Activated CD8-positive, alpha-beta T cell treated with anti-CD3 and anti-CD28 coated beads, Interleukin-2, amount 10 ng/mL, durations not matched to agents 7 days and 5 days (primary cell): ENCODE measurements at regions of chr5 and their contacts with region 1.

Region 1: DNA sequence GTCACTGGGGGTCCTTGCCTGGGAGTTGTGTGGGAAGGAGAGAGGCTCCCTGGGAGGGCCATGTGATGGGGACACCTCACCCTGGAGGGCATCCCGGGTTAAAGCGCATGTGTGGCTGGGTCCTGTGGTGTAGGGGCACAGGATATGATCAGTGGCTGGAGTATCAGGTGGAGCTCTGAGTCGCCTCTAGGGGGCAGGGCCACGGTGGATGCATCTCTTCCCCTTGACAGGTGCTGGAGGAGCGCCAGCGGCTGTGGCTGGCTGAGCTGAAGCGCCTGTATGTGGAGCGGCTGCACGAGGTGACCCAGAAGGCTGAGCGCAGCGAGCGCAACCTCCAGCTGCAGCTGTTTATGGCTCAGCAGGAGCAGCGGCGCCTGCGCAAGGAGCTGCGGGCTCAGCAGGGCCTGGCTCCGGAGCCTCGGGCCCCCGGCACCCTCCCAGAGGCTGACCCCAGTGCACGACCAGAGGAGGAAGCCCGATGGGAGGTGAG is 7.6 kb downstream of the N4BP3 start:
- DNase-seq: peak; percentile 90
- ATAC-seq: peak; percentile 87
- H3K4me3 Mint-ChIP-seq: no peak overlapping the region
- H3K27ac Mint-ChIP-seq: no peak overlapping the region
- H3K4me1 Mint-ChIP-seq: peaks cover 31% of the 10 kb centered on the region
- H3K27me3 Mint-ChIP-seq: no peaks in the 10 kb centered on the region

Region 2: GRCh38 chr5:177982072-177982727 is 138.7 kb before region 1 on chr5:
- CTCF ChIA-PET with region 1: no interaction called
- POLR2A ChIA-PET with region 1: no interaction called
- DNase-seq: peak; percentile 53
- ATAC-seq: peak; percentile 57
- H3K4me3 Mint-ChIP-seq: no peak overlapping the region
- H3K27ac Mint-ChIP-seq: no peak overlapping the region
- H3K4me1 Mint-ChIP-seq: peaks cover 8% of the 10 kb centered on the region
- H3K27me3 Mint-ChIP-seq: peaks cover 50% of the 10 kb centered on the region

Region 3: DNA sequence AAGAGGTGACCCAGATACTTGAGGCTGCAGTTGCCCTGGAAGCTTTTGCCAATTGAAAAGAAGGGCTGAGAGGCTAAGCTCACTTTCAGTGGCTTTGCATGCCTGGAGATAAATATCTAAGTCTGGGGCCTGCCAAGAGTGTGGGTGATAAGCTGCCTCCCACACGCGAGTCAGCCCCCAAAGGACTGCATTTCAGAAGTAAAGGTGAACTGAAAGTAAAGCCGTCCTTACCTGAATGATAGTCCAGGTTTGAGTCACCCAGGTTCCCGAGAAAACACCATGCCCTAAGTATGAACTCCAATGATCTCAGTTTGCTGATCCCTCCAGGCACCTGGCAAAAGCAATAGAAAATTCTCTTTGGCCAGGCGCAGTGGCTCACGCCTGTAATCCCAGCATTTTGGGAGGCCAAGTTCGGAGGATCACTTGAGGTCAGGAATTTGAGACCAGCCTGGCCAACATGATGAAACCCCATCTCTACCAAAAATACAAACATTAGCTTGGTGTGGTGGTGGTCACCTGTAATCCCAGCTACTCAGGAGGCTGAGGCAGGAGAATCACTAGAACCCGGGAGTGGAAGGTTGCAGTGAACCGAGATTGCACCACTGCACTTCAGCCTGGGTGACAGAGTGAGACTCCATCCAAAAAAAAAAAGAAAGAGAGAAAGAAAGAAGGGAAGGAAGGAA is 29.9 kb before region 1 on chr5:
- CTCF ChIA-PET with region 1: interaction called, 15 read pairs
- POLR2A ChIA-PET with region 1: no interaction called
- DNase-seq: no peak
- ATAC-seq: no peak
- H3K4me3 Mint-ChIP-seq: no peak overlapping the region
- H3K27ac Mint-ChIP-seq: no peak overlapping the region
- H3K4me1 Mint-ChIP-seq: peaks cover 12% of the 10 kb centered on the region
- H3K27me3 Mint-ChIP-seq: peaks cover 3% of the 10 kb centered on the region

Region 4: DNA sequence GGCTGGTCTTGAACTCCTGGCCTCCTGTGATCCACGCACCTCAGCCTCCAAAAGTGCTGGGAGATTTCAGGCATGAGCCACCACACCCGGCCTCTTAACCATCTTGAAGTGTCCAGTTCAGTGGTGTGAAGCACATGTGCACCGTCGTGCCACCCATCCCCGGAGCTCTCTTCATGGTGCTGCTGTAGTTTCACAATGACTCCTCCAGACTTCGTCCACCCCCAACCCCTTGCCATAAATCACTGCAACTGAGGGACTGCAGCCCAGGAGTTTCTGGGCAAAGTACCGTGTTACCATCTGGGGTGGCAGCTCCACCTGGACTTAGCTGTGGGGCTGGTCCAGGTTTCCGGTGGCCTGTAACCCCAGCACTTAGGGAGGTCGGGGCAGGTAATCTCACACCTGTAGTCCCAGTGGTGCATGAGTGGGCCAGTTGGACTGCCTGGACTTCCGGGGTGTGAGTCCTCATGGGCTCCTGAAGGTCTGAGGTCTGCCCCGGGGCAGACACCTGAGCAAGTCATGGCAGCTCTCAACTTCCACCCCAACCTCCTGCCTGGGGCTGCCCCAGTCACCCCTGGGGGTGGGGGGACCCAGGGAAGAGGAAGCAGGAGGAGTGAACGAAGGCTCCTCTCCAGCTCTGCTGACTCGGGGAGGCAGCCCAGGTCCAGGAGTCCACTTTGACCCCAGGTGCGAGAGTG is 14.2 kb before region 1 on chr5:
- CTCF ChIA-PET with region 1: interaction called, 16 read pairs
- POLR2A ChIA-PET with region 1: interaction called, 5 read pairs
- DNase-seq: no peak
- ATAC-seq: no peak
- H3K4me3 Mint-ChIP-seq: no peak overlapping the region
- H3K27ac Mint-ChIP-seq: no peak overlapping the region
- H3K4me1 Mint-ChIP-seq: peaks cover 10% of the 10 kb centered on the region
- H3K27me3 Mint-ChIP-seq: peaks cover 9% of the 10 kb centered on the region

Region 5: GRCh38 chr5:178146020-178146820 is 25.3 kb after region 1 on chr5:
- CTCF ChIA-PET with region 1: interaction called, 22 read pairs
- POLR2A ChIA-PET with region 1: no interaction called
- DNase-seq: peak; percentile 83
- ATAC-seq: peak; percentile 89
- H3K4me3 Mint-ChIP-seq: no peak overlapping the region
- H3K27ac Mint-ChIP-seq: no peak overlapping the region
- H3K4me1 Mint-ChIP-seq: peaks cover 25% of the 10 kb centered on the region
- H3K27me3 Mint-ChIP-seq: no peaks in the 10 kb centered on the region

Region 6: GRCh38 chr5:178153573-178154343 is 32.8 kb after region 1 on chr5 and contains the start of gene NHP2:
- CTCF ChIA-PET with region 1: interaction called, 22 read pairs
- POLR2A ChIA-PET with region 1: no interaction called
- DNase-seq: peak; percentile 99
- ATAC-seq: peak; percentile 99
- H3K4me3 Mint-ChIP-seq: peak within 1 kb of the TSS; percentile 98
- H3K27ac Mint-ChIP-seq: peak within 1 kb of the TSS; percentile 93
- H3K4me1 Mint-ChIP-seq: peaks cover 43% of the 10 kb centered on the region
- H3K27me3 Mint-ChIP-seq: no peaks in the 10 kb centered on the region
- total RNA-seq, gene NHP2: 176 to 184 TPM